ENCODE measurements at regions of chr1 and their contacts with region 1.

Region 1: GRCh38 chr1:77533660-77534305 is 148.7 kb downstream of the ZZZ3 start:
- DNase-seq: peak; percentile 77
- H3K4me3 Mint-ChIP-seq: no peak overlapping the region
- H3K27ac Mint-ChIP-seq: peak overlapping the region; percentile 15
- H3K4me1 Mint-ChIP-seq: peaks cover 8% of the 10 kb centered on the region
- H3K27me3 Mint-ChIP-seq: no peaks in the 10 kb centered on the region

Region 2: GRCh38 chr1:76901158-76901767 is 632.5 kb before region 1 on chr1:
- CTCF ChIA-PET with region 1: no interaction called
- intact Hi-C with region 1: loop called (anchors 1 kb)
- DNase-seq: peak; percentile 57
- H3K4me3 Mint-ChIP-seq: no peak overlapping the region
- H3K27ac Mint-ChIP-seq: no peak overlapping the region
- H3K4me1 Mint-ChIP-seq: no peaks in the 10 kb centered on the region
- H3K27me3 Mint-ChIP-seq: no peaks in the 10 kb centered on the region

Region 3: DNA sequence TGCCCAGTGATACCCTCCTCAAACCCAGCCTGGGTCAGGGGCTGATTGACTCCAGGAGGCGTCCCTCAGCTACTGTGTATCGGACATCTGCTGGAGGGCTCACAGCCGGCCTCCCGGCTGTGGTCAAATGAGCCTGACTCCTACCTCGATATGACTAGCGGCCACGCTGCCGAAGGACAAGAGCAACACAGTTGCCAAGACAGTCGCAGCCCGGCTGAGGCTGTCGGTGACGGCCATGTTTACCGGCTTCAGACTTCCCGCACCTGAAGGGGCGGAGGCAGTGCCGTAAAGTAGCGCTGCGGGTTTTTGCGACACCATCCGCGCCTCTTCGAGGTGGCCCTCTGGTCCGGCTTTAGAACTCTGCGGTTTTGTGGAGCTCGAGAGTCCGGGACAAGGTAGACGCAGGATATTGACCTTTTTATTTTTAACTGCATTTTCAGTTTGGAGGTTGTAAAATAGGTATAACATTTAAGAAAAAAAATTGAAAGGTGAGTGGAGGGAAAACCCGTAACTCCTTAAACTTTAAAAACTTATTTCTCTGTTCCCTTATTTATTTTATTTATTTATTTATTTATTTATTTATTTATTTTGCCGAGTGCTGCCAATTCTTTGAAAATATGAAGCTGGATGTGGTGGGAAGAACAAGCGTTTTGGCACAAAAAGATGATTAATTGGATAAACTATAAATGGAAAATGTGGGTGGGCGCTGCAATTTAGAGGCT is 314.5 kb before region 1 on chr1 and contains the start of gene PIGK:
- CTCF ChIA-PET with region 1: interaction called, 5 read pairs
- intact Hi-C with region 1: loop called (anchors 1 kb)
- DNase-seq: peak; percentile 95
- H3K4me3 Mint-ChIP-seq: peak within 1 kb of the TSS; percentile 93
- H3K27ac Mint-ChIP-seq: peak within 1 kb of the TSS; percentile 94
- H3K4me1 Mint-ChIP-seq: peaks cover 37% of the 10 kb centered on the region
- H3K27me3 Mint-ChIP-seq: no peaks in the 10 kb centered on the region
- total RNA-seq, gene PIGK: 27.3 to 30.8 TPM

Region 4: GRCh38 chr1:77281491-77282186 is 252.1 kb before region 1 on chr1 and contains the start of gene AK5:
- CTCF ChIA-PET with region 1: interaction called, 8 read pairs
- intact Hi-C with region 1: loop called (anchors 1 kb)
- DNase-seq: peak; percentile 58
- H3K4me3 Mint-ChIP-seq: peak within 1 kb of the TSS; percentile 75
- H3K27ac Mint-ChIP-seq: no peak within 1 kb of the TSS
- H3K4me1 Mint-ChIP-seq: peaks cover 37% of the 10 kb centered on the region
- H3K27me3 Mint-ChIP-seq: no peaks in the 10 kb centered on the region
- total RNA-seq, gene AK5: 7.0 to 9.1 TPM

Region 5: GRCh38 chr1:77394166-77394565 is 139.6 kb before region 1 on chr1:
- CTCF ChIA-PET with region 1: no interaction called
- intact Hi-C with region 1: loop called (anchors 10 kb)
- DNase-seq: no peak
- H3K4me3 Mint-ChIP-seq: no peak overlapping the region
- H3K27ac Mint-ChIP-seq: no peak overlapping the region
- H3K4me1 Mint-ChIP-seq: no peaks in the 10 kb centered on the region
- H3K27me3 Mint-ChIP-seq: no peaks in the 10 kb centered on the region

Region 6: GRCh38 chr1:77900687-77901293 is 367.0 kb after region 1 on chr1:
- CTCF ChIA-PET with region 1: no interaction called
- intact Hi-C with region 1: loop called (anchors 5 kb)
- DNase-seq: peak; percentile 40
- H3K4me3 Mint-ChIP-seq: no peak overlapping the region
- H3K27ac Mint-ChIP-seq: no peak overlapping the region
- H3K4me1 Mint-ChIP-seq: no peaks in the 10 kb centered on the region
- H3K27me3 Mint-ChIP-seq: peaks cover 2% of the 10 kb centered on the region